AG04450 (cell line): ENCODE measurements at regions of chr14 and their contacts with region 1.

Region 1: DNA sequence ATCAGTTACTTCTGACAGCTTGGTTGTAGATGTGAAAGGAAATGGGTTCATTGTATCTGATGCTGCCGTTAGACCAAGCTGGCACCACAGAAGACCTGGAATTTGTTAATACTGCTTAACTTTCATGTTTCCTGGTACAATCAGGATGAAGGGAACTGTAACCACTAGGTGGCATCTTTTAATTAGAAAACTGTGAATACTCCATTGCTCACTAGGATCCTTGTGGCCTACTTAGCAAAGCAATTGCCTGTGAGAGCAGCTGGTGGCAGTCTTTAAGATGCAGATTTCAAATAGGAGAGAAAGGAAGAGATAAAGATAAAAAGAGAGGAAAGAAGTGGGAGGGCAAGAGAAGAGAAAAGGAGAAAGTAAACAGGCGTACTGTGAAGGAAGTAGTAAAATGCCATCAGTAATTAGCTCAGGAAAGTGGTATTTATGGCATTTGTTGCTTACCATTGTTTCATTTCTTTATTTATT is 114.5 kb downstream of the RAD51B start:
- DNase-seq: peak; percentile 55
- H3K4me3 ChIP-seq: no peak overlapping the region
- H3K27ac ChIP-seq: no peak overlapping the region
- H3K27me3 ChIP-seq: no peaks in the 10 kb centered on the region
- CTCF ChIP-seq: peak; percentile 75

Region 2: GRCh38 chr14:67619446-67620216 is 314.4 kb before region 1 on chr14 and contains the start of gene ARG2:
- CTCF ChIA-PET with region 1: no interaction called
- POLR2A ChIA-PET with region 1: no interaction called
- DNase-seq: peak; percentile 61
- H3K4me3 ChIP-seq: peak within 1 kb of the TSS; percentile 67
- H3K27ac ChIP-seq: no peak within 1 kb of the TSS
- H3K27me3 ChIP-seq: no peaks in the 10 kb centered on the region
- CTCF ChIP-seq: no peak
- polyA plus RNA-seq, gene ARG2: 2.6 TPM in 2 replicates

Region 3: GRCh38 chr14:67908052-67908754 is 25.8 kb before region 1 on chr14:
- CTCF ChIA-PET with region 1: interaction called, 11 read pairs
- POLR2A ChIA-PET with region 1: no interaction called
- DNase-seq: no peak
- H3K4me3 ChIP-seq: no peak overlapping the region
- H3K27ac ChIP-seq: no peak overlapping the region
- H3K27me3 ChIP-seq: no peaks in the 10 kb centered on the region
- CTCF ChIP-seq: no peak

Region 4: GRCh38 chr14:67952786-67953185 is 18.7 kb after region 1 on chr14:
- CTCF ChIA-PET with region 1: no interaction called
- POLR2A ChIA-PET with region 1: no interaction called
- DNase-seq: no peak
- H3K4me3 ChIP-seq: no peak overlapping the region
- H3K27ac ChIP-seq: no peak overlapping the region
- H3K27me3 ChIP-seq: no peaks in the 10 kb centered on the region
- CTCF ChIP-seq: no peak

Region 5: DNA sequence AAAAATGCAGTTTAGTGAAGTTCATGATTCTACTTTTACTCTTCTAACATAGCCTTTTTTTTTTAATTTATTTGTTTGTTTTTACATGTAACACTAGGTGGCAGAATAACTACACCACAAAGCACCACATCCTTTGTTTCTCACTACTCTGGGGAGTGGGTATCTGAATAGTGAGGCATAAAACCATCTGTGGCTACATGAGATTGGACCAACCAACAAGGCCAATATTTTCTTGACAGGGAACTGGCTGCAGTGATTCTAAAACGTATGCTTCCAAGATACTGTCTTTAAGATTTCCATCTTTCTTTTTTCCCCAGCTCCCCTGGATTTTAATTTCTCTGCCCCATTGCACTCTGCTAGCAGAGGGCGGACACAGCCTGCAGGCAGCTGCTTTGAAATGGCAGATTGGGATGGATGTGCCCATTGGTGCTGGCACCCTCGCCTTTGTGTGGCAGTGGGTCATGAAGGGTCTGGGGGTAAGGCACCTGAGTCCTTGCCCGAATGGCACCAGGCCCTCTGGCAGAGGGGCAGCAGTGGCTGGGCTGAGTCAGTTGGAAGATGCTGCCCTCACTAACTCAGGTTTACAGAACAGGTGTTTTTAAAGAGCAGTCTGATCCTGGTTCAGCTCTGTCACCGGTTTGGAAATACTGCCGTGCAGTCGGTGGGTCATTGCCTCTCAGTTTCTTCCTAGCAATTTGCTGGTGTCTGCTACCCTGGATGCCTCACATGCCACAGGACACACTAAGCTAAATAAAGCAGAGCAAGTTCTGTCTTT is 314.6 kb after region 1 on chr14:
- CTCF ChIA-PET with region 1: interaction called, 11 read pairs
- POLR2A ChIA-PET with region 1: no interaction called
- DNase-seq: no peak
- H3K4me3 ChIP-seq: no peak overlapping the region
- H3K27ac ChIP-seq: peak overlapping the region; percentile 33
- H3K27me3 ChIP-seq: no peaks in the 10 kb centered on the region
- CTCF ChIP-seq: peak; percentile 60

Region 6: GRCh38 chr14:68513838-68514620 is 580.0 kb after region 1 on chr14:
- CTCF ChIA-PET with region 1: no interaction called
- POLR2A ChIA-PET with region 1: no interaction called
- DNase-seq: no peak
- H3K4me3 ChIP-seq: no peak overlapping the region
- H3K27ac ChIP-seq: no peak overlapping the region
- H3K27me3 ChIP-seq: no peaks in the 10 kb centered on the region
- CTCF ChIP-seq: no peak

Region 7: GRCh38 chr14:68824517-68825347 is 890.7 kb after region 1 on chr14:
- CTCF ChIA-PET with region 1: interaction called, 14 read pairs
- POLR2A ChIA-PET with region 1: no interaction called
- DNase-seq: no peak
- H3K4me3 ChIP-seq: no peak overlapping the region
- H3K27ac ChIP-seq: no peak overlapping the region
- H3K27me3 ChIP-seq: no peaks in the 10 kb centered on the region
- CTCF ChIP-seq: peak; percentile 90